ENCODE measurements at regions of chr10 and their contacts with region 1.

Region 1: GRCh38 chr10:67884313-67884841 is at the start of gene SIRT1:
- DNase-seq: peak; percentile 97 to 99 (median 98)
- ATAC-seq: peak; percentile 91
- H3K4me3 ChIP-seq: peak within 1 kb of the TSS; percentile 72
- H3K27ac ChIP-seq: peak within 1 kb of the TSS; percentile 92
- H3K4me1 ChIP-seq: peaks cover 9 to 16% of the 10 kb centered on the region in 2 experiments; a peak in 4 of 5 replicates
- H3K27me3 ChIP-seq: no peaks in the 10 kb centered on the region
- CTCF ChIP-seq: peak in 1 of 3 experiments; percentile 28; a peak in 1 of 6 replicates
- EP300 ChIP-seq: peak; percentile 71
- POLR2A ChIP-seq: peak; percentile 87
- RAD21 ChIP-seq: no peak
- polyA plus RNA-seq, gene SIRT1: 7.8 to 8.8 TPM

Region 2: GRCh38 chr10:67861750-67862460 is 22.5 kb before region 1 on chr10:
- CTCF ChIA-PET with region 1: no interaction called
- POLR2A ChIA-PET with region 1: interaction called, 10 read pairs
- in situ Hi-C with region 1: no loop called
- intact Hi-C with region 1: no loop called
- DNase-seq: no peak
- ATAC-seq: peak; percentile 74
- H3K4me3 ChIP-seq: no peak overlapping the region
- H3K27ac ChIP-seq: no peak overlapping the region
- H3K4me1 ChIP-seq: no peaks in the 10 kb centered on the region; a peak in 1 of 5 replicates
- H3K27me3 ChIP-seq: no peaks in the 10 kb centered on the region
- CTCF ChIP-seq: no peak
- EP300 ChIP-seq: no peak
- POLR2A ChIP-seq: no peak
- RAD21 ChIP-seq: no peak

Region 3: DNA sequence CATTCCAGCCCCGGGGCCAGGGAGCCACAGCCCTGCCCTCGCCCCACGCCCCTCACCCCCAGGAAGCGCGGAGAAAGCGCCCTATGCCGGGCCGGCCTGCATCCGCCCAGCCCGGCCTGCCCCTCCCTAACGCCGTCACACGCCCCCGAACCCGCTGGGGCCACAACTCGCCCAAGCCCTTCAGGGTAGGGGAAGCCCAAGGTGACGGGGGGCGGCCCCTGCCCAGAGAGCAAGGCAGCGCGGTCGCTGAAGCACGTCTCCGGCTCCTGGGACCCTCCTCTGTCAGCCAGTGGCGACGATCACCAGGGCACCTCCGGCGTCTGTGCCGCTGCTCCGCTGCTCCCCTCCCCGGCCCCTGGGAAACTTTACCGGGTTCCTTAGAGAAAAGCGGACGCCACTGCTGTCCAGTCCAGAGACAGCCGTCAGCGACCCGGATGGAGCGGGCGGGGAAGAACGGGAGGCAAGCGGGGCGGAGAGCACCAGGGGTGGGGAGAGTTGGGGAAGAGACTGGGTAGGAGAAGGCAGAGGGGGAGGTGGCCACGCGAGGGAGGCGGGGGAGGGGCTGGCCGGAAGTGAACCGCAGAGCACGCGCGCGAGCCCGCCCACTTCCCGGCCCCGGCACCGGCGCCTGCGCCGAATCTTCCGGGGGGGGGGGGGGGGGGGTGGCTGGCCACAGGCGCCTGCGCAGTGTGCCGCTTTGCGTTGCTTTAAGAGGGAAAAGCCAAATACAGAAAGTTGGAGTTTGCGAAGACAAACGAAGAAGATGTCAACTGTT is 190.6 kb after region 1 on chr10 and contains the start of gene HERC4:
- CTCF ChIA-PET with region 1: no interaction called
- POLR2A ChIA-PET with region 1: no interaction called
- in situ Hi-C with region 1: no loop called
- intact Hi-C with region 1: loop called (anchors 10 kb)
- DNase-seq: peak; percentile 97 to 99 (median 98)
- ATAC-seq: peak; percentile 96
- H3K4me3 ChIP-seq: peak within 1 kb of the TSS; percentile 99
- H3K27ac ChIP-seq: peak within 1 kb of the TSS; percentile 95
- H3K4me1 ChIP-seq: peaks cover 7 to 9% of the 10 kb centered on the region in 2 experiments; a peak in 4 of 5 replicates
- H3K27me3 ChIP-seq: no peaks in the 10 kb centered on the region
- CTCF ChIP-seq: no peak
- EP300 ChIP-seq: peak; percentile 25; the same call in 1 of the 2 replicates
- POLR2A ChIP-seq: peak; percentile 91
- RAD21 ChIP-seq: no peak; a peak in 1 of 4 replicates
- polyA plus RNA-seq, gene HERC4: 12.5 to 17.4 TPM

Measured in K562 (cell line).